GM10248 (cell line): ENCODE measurements at regions of chr6 and their contacts with region 1.

Region 1: DNA sequence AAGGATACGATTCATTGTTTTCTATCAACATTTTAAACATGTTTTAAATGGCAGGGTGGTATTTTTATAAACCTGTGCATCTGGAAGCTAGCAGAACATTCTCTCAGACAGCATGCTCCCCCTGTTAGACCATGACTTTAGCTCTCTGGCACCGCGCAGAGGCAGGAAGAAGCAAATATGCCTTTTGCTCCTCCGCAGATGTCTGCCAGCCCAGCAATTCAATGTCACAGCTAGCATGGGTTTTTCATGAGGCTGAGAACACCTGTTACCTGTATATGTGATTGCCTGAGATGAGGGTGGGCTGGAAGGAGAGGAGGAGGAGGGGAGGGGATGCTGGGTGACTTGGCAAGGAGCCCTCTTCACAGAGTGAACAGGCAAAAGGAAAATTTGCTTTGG is 6.7 kb downstream of the MTCH1 start:
- DNase-seq: no peak
- CTCF ChIP-seq: peak; percentile 48

Region 2: GRCh38 chr6:36955671-36956445 is 23.5 kb before region 1 on chr6:
- CTCF ChIA-PET with region 1: interaction called, 10 read pairs
- POLR2A ChIA-PET with region 1: no interaction called
- DNase-seq: no peak
- CTCF ChIP-seq: no peak

Region 3: GRCh38 chr6:36963451-36964290 is 15.7 kb before region 1 on chr6:
- CTCF ChIA-PET with region 1: interaction called, 18 read pairs
- POLR2A ChIA-PET with region 1: no interaction called
- DNase-seq: peak; percentile 63
- CTCF ChIP-seq: no peak